ENCODE measurements at regions of chr11 and their contacts with region 1.

Region 1: GRCh38 chr11:119459293-119459976 is 36.5 kb upstream of the THY1 start:
- DNase-seq: no peak
- H3K4me3 ChIP-seq: no peak overlapping the region
- H3K27ac ChIP-seq: no peak overlapping the region
- H3K4me1 ChIP-seq: no peaks in the 10 kb centered on the region
- H3K27me3 ChIP-seq: no peaks in the 10 kb centered on the region
- CTCF ChIP-seq: no peak

Region 2: GRCh38 chr11:119284344-119285157 is 174.9 kb before region 1 on chr11:
- CTCF ChIA-PET with region 1: no interaction called
- POLR2A ChIA-PET with region 1: no interaction called
- intact Hi-C with region 1: no loop called
- DNase-seq: peak; percentile 54
- H3K4me3 ChIP-seq: no peak overlapping the region
- H3K27ac ChIP-seq: no peak overlapping the region
- H3K4me1 ChIP-seq: no peaks in the 10 kb centered on the region
- H3K27me3 ChIP-seq: no peaks in the 10 kb centered on the region
- CTCF ChIP-seq: peak; percentile 67

Region 3: GRCh38 chr11:119323538-119324033 is 135.8 kb before region 1 on chr11:
- CTCF ChIA-PET with region 1: interaction called, 10 read pairs
- POLR2A ChIA-PET with region 1: no interaction called
- intact Hi-C with region 1: no loop called
- DNase-seq: peak; percentile 85
- H3K4me3 ChIP-seq: no peak overlapping the region
- H3K27ac ChIP-seq: no peak overlapping the region
- H3K4me1 ChIP-seq: peaks cover 12% of the 10 kb centered on the region
- H3K27me3 ChIP-seq: no peaks in the 10 kb centered on the region
- CTCF ChIP-seq: peak; percentile 93

Measured in A673 (cell line).